Posterior cingulate gyrus (tissue), 11 donors: ENCODE measurements at regions of chr6 and their contacts with region 1.

Region 1: DNA sequence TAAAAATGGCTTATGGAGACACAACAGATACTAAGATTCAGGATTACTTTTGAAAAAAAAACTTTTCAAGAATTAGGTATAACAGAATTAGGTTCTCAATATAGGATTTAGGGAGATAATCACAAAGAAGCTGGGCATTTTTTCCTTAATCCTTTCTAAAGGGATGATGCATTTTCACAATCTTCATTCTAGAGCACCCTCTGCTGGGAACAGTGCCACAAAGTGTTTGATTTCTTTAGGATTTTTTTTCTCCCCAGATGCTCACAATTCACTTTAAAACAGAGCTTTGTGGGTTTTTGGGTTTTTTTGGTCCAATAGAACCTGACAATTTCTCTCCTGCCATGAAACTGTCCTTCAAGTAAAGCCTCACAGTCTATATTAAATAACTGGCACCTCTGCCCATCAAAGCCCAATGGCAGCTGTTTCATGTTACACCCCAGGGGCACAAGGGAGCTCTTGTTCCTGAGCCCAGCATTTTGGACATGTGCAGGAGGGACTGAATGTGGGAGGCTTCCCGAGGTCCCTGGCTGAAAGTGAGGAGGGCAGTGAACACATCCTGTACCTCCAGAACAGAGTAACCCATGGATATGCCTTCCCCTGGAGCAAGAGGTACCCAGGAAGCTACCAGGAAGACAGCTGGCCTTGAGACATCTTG is 39.7 kb downstream of the PREP start:
- DNase-seq: peak in 1 of 10 donors; percentile 74

Region 2: GRCh38 chr6:105087571-105088211 is 275.5 kb before region 1 on chr6:
- intact Hi-C with region 1: loop called (anchors 5 kb)
- DNase-seq: peak in 4 of 10 donors; percentile 12 to 42 (median 22)

Region 3: DNA sequence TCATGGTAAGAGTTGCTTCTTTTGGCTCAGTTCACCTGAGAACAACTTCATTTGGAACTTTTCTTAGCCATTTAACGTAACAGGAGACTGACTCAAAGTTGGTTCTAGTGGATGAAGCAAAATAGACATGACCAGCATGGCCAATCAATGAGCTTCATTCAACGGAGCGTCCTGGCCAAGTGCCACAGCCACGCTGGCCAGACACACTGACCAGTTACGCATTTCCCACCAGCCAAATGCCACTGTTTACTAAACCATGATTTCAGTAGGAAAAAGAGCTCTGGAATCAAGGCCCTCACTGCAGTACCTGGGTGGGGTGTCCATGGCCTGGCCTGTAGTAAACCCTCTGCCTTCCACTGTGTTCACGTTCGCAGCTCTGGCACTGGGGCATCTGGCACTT is 263.9 kb before region 1 on chr6:
- intact Hi-C with region 1: no loop called
- DNase-seq: peak in 8 of 10 donors; percentile 29 to 92 (median 44)

Region 4: GRCh38 chr6:105263685-105264610 is 99.3 kb before region 1 on chr6:
- intact Hi-C with region 1: no loop called
- DNase-seq: no peak